HAP-1 (cell line): ENCODE measurements at regions of chr3 and their contacts with region 1.

Region 1: GRCh38 chr3:52845691-52846431 is 11.0 kb upstream of the MUSTN1 start:
- DNase-seq: peak in 1 of 2 experiments; percentile 40
- H3K4me3 ChIP-seq: no peak overlapping the region
- H3K4me1 ChIP-seq: no peaks in the 10 kb centered on the region
- H3K27me3 ChIP-seq: no peaks in the 10 kb centered on the region

Region 2: DNA sequence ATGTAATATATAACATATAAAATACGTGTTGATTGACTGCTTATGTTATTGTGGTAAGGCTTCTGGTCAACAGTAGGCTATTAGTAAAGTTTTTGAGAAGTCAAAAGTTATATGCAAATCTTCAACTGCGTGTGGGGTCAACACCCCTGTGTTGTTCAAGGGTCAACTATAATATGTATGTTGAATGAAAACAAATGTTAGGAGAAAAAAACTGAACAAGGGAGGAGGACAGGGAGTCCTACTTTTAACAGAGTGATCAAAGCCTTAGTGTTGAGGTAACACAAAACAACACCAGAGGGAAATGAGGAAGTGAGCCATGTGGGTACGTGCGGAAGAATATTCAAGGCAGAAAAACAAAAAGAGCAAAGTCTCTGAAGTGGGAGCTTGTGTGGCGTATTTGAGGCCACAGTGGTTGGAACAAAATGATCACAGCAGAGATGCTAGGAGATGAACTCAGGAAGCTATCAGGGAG is 137.5 kb after region 1 on chr3:
- in situ Hi-C with region 1: loop called (anchors 10 kb)
- DNase-seq: no peak
- H3K4me3 ChIP-seq: no peak overlapping the region
- H3K4me1 ChIP-seq: no peaks in the 10 kb centered on the region
- H3K27me3 ChIP-seq: no peaks in the 10 kb centered on the region